Ovary (tissue), 10 donors: ENCODE measurements at regions of chr11 and their contacts with region 1.

Region 1: DNA sequence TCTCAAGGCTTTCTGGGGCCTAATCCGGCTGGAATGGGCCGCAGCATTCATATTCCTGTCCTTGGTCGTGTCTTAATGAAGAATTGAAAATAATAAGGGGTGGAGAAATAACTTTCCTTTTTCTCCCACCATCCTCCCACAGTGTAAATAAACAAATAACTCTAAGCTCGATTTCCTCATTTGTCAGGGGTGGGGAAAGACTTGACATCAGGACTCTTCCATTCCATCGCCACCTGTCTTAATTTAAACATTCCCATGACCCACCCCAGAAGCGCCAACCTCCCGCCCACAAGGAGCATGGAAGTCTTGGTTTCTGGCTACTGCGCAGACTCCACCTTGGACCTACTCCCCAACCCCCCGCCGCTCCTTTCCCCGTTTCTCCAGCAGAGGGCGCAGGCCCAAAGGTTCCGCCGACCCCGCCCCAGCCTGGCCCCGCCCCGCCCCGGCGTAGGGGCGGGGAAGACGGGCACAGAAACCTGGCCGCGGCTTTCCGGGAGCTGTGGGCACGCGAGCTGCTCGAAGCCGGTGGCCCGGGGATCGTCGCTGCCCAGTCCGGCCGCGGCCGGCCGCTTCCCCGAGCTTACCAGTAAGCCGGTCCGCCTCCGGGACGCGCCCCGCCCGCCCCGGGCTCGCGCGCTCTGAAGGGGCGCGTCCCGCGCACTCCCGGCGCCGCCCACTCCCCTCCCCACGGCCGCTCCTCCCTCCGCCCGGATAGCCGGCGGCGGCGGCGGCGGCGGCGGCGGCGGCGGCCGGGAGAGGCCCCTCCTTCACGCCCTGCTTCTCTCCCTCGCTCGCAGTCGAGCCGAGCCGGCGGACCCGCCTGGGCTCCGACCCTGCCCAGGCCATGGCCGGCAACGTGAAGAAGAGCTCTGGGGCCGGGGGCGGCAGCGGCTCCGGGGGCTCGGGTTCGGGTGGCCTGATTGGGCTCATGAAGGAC is at the start of gene CBL:
- DNase-seq: peak; percentile 93 to 98 (median 97)
- H3K4me3 ChIP-seq: peak within 1 kb of the TSS; percentile 85
- H3K27ac ChIP-seq: peak within 1 kb of the TSS; percentile 95 to 98
- H3K4me1 ChIP-seq: no peaks in the 10 kb centered on the region
- H3K27me3 ChIP-seq: no peaks in the 10 kb centered on the region
- CTCF ChIP-seq: peak; percentile 77 to 93 (median 84)
- EP300 ChIP-seq: no peak
- POLR2A ChIP-seq: peak; percentile 49
- total RNA-seq, gene CBL: 7.6 to 17.9 (median 13.4) TPM

Region 2: GRCh38 chr11:119315131-119316015 is 109.5 kb after region 1 on chr11:
- intact Hi-C with region 1: loop called (anchors 5 to 10 kb)
- DNase-seq: peak in 1 of 5 donors; percentile 39
- H3K4me3 ChIP-seq: peak overlapping the region; percentile 51
- H3K27ac ChIP-seq: peak overlapping the region; percentile 32 to 40
- H3K4me1 ChIP-seq: peaks cover 10% of the 10 kb centered on the region
- H3K27me3 ChIP-seq: no peaks in the 10 kb centered on the region
- CTCF ChIP-seq: no peak
- EP300 ChIP-seq: no peak
- POLR2A ChIP-seq: no peak